SK-N-SH (cell line): ENCODE measurements at regions of chr11 and their contacts with region 1.

Region 1: GRCh38 chr11:27485930-27486773 is 13.6 kb upstream of the LGR4 start:
- DNase-seq: peak; percentile 40
- H3K4me3 ChIP-seq: no peak overlapping the region; a peak in 1 of 4 replicates
- H3K27ac ChIP-seq: no peak overlapping the region
- H3K4me1 ChIP-seq: no peaks in the 10 kb centered on the region
- H3K27me3 ChIP-seq: no peaks in the 10 kb centered on the region
- CTCF ChIP-seq: peak; percentile 98
- EP300 ChIP-seq: no peak
- RAD21 ChIP-seq: peak; percentile 98

Region 2: GRCh38 chr11:27174021-27174420 is 312.1 kb before region 1 on chr11:
- CTCF ChIA-PET with region 1: interaction called, 35 read pairs
- POLR2A ChIA-PET with region 1: no interaction called
- DNase-seq: no peak
- H3K4me3 ChIP-seq: no peak overlapping the region
- H3K27ac ChIP-seq: no peak overlapping the region
- H3K4me1 ChIP-seq: no peaks in the 10 kb centered on the region
- H3K27me3 ChIP-seq: no peaks in the 10 kb centered on the region
- CTCF ChIP-seq: no peak
- EP300 ChIP-seq: no peak
- RAD21 ChIP-seq: no peak

Region 3: GRCh38 chr11:27201454-27202236 is 284.5 kb before region 1 on chr11:
- CTCF ChIA-PET with region 1: interaction called, 35 read pairs
- POLR2A ChIA-PET with region 1: no interaction called
- DNase-seq: peak; percentile 47
- H3K4me3 ChIP-seq: no peak overlapping the region
- H3K27ac ChIP-seq: peak overlapping the region; percentile 54 to 93; a peak in 3 of 4 replicates
- H3K4me1 ChIP-seq: peaks cover 32 to 48% of the 10 kb centered on the region in 2 experiments; a peak in 3 of 4 replicates
- H3K27me3 ChIP-seq: no peaks in the 10 kb centered on the region
- CTCF ChIP-seq: no peak
- EP300 ChIP-seq: peak in 1 of 2 experiments; percentile 68; a peak in 1 of 4 replicates
- RAD21 ChIP-seq: no peak

Region 4: GRCh38 chr11:27296497-27296896 is 189.7 kb before region 1 on chr11:
- CTCF ChIA-PET with region 1: interaction called, 20 read pairs
- POLR2A ChIA-PET with region 1: no interaction called
- DNase-seq: peak; percentile 36
- H3K4me3 ChIP-seq: no peak overlapping the region; a peak in 1 of 4 replicates
- H3K27ac ChIP-seq: no peak overlapping the region
- H3K4me1 ChIP-seq: peaks cover 0 to 39% of the 10 kb centered on the region in 2 experiments; a peak in 1 of 4 replicates
- H3K27me3 ChIP-seq: no peaks in the 10 kb centered on the region
- CTCF ChIP-seq: peak; percentile 76
- EP300 ChIP-seq: no peak
- RAD21 ChIP-seq: peak; percentile 77

Region 5: DNA sequence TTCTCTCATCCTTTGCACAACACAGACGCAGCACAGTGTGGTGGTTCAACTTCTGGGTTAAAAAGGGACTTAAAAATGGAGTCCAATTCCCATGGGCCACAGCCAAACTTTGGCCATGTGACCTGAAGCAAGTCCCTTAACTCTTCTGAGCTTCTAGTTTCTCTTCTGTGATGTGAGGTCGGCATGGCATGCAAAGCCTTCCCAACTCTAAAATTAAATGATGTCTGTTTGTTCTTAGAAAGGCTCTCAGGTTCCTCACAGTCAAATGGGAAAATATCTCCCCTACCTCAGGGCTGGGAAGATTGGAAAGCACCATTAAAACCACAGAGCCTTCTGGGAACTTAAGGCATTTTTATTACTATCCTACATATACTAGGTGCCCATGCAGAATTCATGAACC is 52.4 kb before region 1 on chr11:
- CTCF ChIA-PET with region 1: no interaction called
- POLR2A ChIA-PET with region 1: no interaction called
- DNase-seq: no peak
- H3K4me3 ChIP-seq: no peak overlapping the region
- H3K27ac ChIP-seq: no peak overlapping the region
- H3K4me1 ChIP-seq: peaks cover 4 to 10% of the 10 kb centered on the region in 2 experiments; a peak in 3 of 4 replicates
- H3K27me3 ChIP-seq: no peaks in the 10 kb centered on the region
- CTCF ChIP-seq: no peak
- EP300 ChIP-seq: no peak
- RAD21 ChIP-seq: no peak

Region 6: DNA sequence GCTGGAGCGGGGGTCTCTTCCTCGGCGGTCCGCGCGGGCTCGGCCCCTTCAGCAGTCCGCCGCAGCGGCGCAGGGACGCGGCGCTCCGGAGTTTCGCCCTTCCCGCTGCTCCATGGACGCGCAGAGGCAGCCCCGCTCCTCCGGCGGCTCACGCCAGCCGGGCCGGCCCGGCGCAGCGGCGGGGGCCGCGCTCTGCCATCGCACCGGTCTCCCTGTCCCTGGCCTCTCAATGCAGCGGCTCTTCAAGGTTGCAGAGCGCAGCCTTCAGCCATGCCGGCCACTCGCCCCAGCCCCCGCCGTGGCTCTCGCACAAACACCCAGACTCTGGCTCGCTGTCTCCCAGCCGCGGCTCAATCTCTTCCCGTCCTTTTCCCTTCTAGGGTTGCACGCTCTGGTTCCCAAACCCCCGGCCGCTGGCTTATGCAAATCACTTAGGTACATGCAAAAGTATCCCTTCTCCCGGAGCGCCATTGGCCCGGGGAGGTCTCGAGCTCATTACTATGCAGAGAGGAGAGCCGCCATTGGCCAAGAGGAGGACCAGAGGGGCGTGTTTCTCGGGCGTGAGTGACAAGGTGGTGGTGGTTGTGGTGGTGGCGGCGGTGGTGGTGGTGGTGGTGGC is 13.6 kb before region 1 on chr11 and contains the start of gene LGR4:
- CTCF ChIA-PET with region 1: interaction called, 21 read pairs
- POLR2A ChIA-PET with region 1: no interaction called
- DNase-seq: peak; percentile 90
- H3K4me3 ChIP-seq: peak within 1 kb of the TSS; percentile 75 to 87
- H3K27ac ChIP-seq: peak within 1 kb of the TSS; percentile 63 to 75
- H3K4me1 ChIP-seq: peaks cover 10 to 33% of the 10 kb centered on the region in 2 experiments
- H3K27me3 ChIP-seq: no peaks in the 10 kb centered on the region
- CTCF ChIP-seq: no peak
- EP300 ChIP-seq: no peak
- RAD21 ChIP-seq: no peak
- polyA plus RNA-seq, gene LGR4: 2.6 and 4.6 TPM in 2 replicates

Region 7: GRCh38 chr11:27571156-27571825 is 85.1 kb after region 1 on chr11:
- CTCF ChIA-PET with region 1: no interaction called
- POLR2A ChIA-PET with region 1: no interaction called
- DNase-seq: peak; percentile 7
- H3K4me3 ChIP-seq: no peak overlapping the region
- H3K27ac ChIP-seq: peak overlapping the region in 1 of 2 experiments; percentile 1; a peak in 1 of 4 replicates
- H3K4me1 ChIP-seq: peaks cover 2 to 8% of the 10 kb centered on the region in 2 experiments; a peak in 3 of 4 replicates
- H3K27me3 ChIP-seq: no peaks in the 10 kb centered on the region
- CTCF ChIP-seq: no peak
- EP300 ChIP-seq: no peak
- RAD21 ChIP-seq: no peak

Region 8: DNA sequence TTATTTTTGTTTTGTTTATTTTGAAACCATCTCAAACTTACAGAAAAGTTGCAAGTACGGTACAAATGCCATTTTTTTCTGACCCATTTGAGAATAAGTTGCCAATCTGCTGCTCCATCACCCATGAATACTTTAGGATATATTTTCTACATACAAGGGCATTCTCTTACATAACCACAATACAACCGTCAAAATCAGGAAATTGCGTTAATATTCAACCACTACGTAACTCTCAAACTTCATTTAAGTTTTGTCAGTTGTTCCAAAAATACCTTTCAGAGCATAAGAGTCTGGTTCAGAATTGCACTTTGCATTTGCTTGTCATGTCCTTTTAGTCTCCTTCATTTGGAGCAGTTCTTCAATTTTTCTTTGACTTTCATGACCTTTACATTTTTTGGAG is 408.4 kb after region 1 on chr11:
- CTCF ChIA-PET with region 1: no interaction called
- POLR2A ChIA-PET with region 1: no interaction called
- DNase-seq: no peak
- H3K4me3 ChIP-seq: no peak overlapping the region
- H3K27ac ChIP-seq: no peak overlapping the region
- H3K4me1 ChIP-seq: no peaks in the 10 kb centered on the region
- H3K27me3 ChIP-seq: no peaks in the 10 kb centered on the region
- CTCF ChIP-seq: no peak
- EP300 ChIP-seq: no peak
- RAD21 ChIP-seq: no peak